ENCODE measurements at regions of chr9 and their contacts with region 1.

Region 1: DNA sequence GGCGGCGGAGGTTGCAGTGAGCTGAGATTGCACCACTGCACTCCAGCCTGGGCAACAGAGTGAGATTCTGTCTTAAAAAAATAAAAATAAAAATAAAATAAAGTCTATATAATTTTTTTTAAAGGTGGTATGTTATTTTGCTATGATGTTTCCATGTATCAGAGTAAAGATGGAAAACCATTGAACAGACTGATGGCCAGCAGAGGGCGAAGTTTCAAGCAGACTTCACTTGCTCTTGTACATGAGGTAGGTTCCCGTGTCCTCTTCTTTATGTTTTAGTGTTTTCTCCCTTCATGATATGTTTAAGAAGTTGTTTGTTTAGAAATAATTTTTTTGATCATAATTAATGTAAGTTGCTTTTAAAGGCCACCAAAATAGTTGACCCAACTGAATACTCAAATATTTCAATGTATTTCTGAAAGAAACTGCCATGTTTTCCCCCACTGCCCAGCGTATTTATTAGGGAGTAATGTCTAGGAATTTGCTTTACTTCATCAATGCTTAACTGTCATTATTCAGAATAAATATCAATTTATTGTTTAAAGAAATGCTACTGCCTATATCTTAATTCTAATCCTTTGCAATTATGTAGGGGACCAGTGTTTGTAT is 146.4 kb downstream of the HACD4 start:
- DNase-seq: peak; percentile 16
- CTCF ChIP-seq: peak; percentile 43

Region 2: DNA sequence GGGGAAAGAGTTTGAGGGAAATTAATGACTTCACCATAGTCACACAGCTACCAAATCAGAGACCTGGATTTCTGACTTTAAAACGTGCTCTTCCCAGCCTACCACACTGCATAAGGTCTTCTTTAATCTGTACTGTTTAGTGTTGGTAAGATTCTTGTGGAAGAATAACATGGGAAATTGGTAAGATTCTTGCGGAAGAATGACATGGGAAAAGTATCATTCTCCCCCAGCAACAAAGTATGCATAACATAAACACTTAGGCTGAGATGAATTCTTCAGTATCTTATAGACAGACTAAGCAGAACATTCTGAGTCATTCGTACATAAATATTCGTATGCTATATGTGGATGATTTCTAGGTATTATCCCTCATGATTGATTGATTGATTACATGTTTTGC is 30.6 kb before region 1 on chr9:
- CTCF ChIA-PET with region 1: interaction called, 12 read pairs
- POLR2A ChIA-PET with region 1: no interaction called
- DNase-seq: no peak
- CTCF ChIP-seq: no peak

Region 3: DNA sequence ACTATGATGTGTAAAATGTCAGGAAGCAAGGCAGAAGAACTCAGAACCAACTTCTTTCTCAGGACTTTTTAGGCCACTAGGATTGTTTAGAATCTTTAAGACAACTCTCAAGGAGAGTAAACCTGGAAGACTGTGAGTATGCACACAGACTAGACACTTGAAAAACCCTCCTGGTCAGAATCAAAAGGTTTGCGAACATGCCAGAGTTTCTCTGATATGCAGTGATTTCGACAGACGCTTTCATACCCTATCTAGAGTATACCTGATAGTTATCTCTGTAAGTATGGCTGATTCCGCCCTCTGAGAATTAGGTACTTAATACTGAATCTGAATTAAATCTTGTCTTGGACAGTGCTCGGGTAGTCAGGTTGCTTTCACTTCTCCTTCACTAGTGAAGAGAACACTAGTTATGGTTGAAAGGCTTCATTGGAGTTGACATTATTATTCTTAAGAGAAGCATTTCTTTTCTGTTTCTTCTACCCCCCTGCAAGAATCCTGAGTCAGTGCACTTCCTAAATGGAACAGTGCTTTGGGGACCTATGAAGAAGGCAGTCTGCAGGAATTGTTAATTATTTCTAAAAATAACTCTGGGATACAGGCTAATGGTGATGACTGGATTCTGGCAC is 11.7 kb before region 1 on chr9:
- CTCF ChIA-PET with region 1: interaction called, 19 read pairs
- POLR2A ChIA-PET with region 1: no interaction called
- DNase-seq: no peak
- CTCF ChIP-seq: no peak

Region 4: DNA sequence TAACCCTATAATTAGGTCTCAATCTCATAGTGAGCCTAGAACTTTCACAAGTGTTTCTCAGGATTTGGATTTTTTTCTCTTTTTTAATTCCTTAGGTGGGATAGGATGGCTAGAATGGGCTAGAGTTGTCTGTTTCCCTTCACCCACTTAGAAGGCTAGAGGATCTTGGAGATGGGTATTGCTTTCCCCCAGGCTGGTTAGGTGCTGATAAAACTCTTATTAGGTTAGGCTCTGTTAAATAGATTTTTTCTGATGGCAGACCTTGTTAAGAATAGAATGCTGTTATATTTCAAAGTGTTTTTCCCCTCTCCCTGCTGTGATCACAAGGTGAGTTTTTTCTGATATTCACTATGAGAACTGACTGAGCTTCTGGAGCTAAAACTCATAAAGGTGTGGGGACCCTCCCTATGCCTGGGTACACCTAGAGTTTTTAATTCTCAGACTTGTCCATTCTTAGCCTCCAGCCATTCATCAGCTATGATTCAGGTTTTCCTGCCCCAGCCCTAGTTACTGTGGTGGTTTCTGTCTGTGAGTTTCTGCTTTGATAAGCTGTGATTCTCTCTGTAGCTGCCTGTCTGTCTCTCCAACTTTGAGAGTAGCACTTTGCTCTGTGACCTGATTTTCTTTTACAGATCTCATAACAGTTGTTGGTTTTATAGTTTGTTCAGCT is 13.9 kb after region 1 on chr9:
- CTCF ChIA-PET with region 1: interaction called, 12 read pairs
- POLR2A ChIA-PET with region 1: no interaction called
- DNase-seq: no peak
- CTCF ChIP-seq: no peak

Region 5: GRCh38 chr9:20914556-20914955 is 29.5 kb after region 1 on chr9:
- CTCF ChIA-PET with region 1: no interaction called
- POLR2A ChIA-PET with region 1: no interaction called
- DNase-seq: no peak
- CTCF ChIP-seq: no peak